Endothelial cell of umbilical vein (primary cell): ENCODE measurements at regions of chr9 and their contacts with region 1.

Region 1: GRCh38 chr9:19464764-19465585 is 56.2 kb downstream of the ACER2 start:
- DNase-seq: peak; percentile 63
- H3K4me3 ChIP-seq: peak overlapping the region; percentile 13 to 27 (median 19)
- H3K27ac ChIP-seq: no peak overlapping the region
- H3K4me1 ChIP-seq: peaks cover 2% of the 10 kb centered on the region
- H3K27me3 ChIP-seq: peaks cover 2% of the 10 kb centered on the region in 2 experiments
- CTCF ChIP-seq: peak; percentile 71 to 77
- POLR2A ChIP-seq: no peak

Region 2: GRCh38 chr9:18874069-18874468 is 590.9 kb before region 1 on chr9:
- CTCF ChIA-PET with region 1: no interaction called
- POLR2A ChIA-PET with region 1: no interaction called
- dilution Hi-C with region 1: no loop called
- intact Hi-C with region 1: no loop called
- DNase-seq: no peak
- H3K4me3 ChIP-seq: no peak overlapping the region
- H3K27ac ChIP-seq: no peak overlapping the region
- H3K4me1 ChIP-seq: no peaks in the 10 kb centered on the region
- H3K27me3 ChIP-seq: no peaks in the 10 kb centered on the region
- CTCF ChIP-seq: no peak
- POLR2A ChIP-seq: no peak

Region 3: DNA sequence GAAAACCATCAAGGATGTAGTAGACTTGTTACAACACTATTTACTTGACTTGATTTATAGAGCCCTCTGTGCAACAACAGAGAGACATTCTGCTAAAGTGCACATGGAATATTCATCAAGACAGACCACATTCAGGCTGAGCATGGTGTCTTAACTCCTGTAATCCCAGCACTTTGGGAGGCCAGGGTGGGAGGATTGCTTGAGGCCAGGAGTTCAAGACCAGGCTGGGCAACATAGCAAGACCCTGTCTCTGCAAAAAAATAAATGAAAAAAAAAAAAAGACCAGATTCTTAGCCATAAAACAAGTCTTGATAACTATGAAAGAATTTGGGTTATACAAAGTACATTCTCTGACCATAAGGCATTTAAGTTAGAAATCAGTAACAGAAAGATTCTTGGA is 209.2 kb before region 1 on chr9:
- CTCF ChIA-PET with region 1: no interaction called
- POLR2A ChIA-PET with region 1: no interaction called
- dilution Hi-C with region 1: no loop called
- intact Hi-C with region 1: no loop called
- DNase-seq: no peak
- H3K4me3 ChIP-seq: no peak overlapping the region
- H3K27ac ChIP-seq: no peak overlapping the region
- H3K4me1 ChIP-seq: no peaks in the 10 kb centered on the region
- H3K27me3 ChIP-seq: no peaks in the 10 kb centered on the region
- CTCF ChIP-seq: no peak
- POLR2A ChIP-seq: no peak

Region 4: DNA sequence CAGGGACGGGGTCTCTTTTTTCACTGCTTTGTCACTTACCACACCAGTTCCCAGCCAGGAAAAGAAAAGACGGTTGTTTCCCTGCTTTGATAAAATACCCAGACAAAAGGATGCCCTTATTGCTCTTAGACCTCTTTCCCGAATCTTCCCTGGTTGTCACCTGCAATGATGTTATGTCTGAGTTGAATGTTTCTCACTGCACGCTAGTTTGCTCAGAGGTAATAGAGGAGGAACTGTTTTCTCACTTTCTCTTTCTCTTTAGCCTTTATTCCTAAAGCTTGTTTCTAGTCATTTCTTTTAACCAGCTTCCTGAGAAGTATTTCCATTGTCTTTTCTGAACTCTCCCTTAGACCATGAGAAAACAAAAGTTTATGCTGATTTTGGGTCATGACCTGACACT is 23.2 kb before region 1 on chr9:
- CTCF ChIA-PET with region 1: interaction called, 15 read pairs
- POLR2A ChIA-PET with region 1: no interaction called
- dilution Hi-C with region 1: no loop called
- intact Hi-C with region 1: no loop called
- DNase-seq: peak; percentile 47
- H3K4me3 ChIP-seq: no peak overlapping the region
- H3K27ac ChIP-seq: no peak overlapping the region
- H3K4me1 ChIP-seq: no peaks in the 10 kb centered on the region
- H3K27me3 ChIP-seq: no peaks in the 10 kb centered on the region
- CTCF ChIP-seq: no peak
- POLR2A ChIP-seq: no peak

Region 5: GRCh38 chr9:19485188-19485587 is 20.2 kb after region 1 on chr9:
- CTCF ChIA-PET with region 1: interaction called, 22 read pairs
- POLR2A ChIA-PET with region 1: no interaction called
- dilution Hi-C with region 1: no loop called
- intact Hi-C with region 1: no loop called
- DNase-seq: no peak
- H3K4me3 ChIP-seq: no peak overlapping the region
- H3K27ac ChIP-seq: no peak overlapping the region
- H3K4me1 ChIP-seq: no peaks in the 10 kb centered on the region
- H3K27me3 ChIP-seq: peaks cover 1 to 7% of the 10 kb centered on the region in 2 experiments
- CTCF ChIP-seq: no peak
- POLR2A ChIP-seq: no peak

Region 6: GRCh38 chr9:19748278-19749126 is 283.5 kb after region 1 on chr9:
- CTCF ChIA-PET with region 1: no interaction called
- POLR2A ChIA-PET with region 1: no interaction called
- dilution Hi-C with region 1: no loop called
- intact Hi-C with region 1: no loop called
- DNase-seq: peak; percentile 37
- H3K4me3 ChIP-seq: no peak overlapping the region
- H3K27ac ChIP-seq: peak overlapping the region; percentile 50
- H3K4me1 ChIP-seq: peaks cover 18% of the 10 kb centered on the region
- H3K27me3 ChIP-seq: no peaks in the 10 kb centered on the region
- CTCF ChIP-seq: no peak
- POLR2A ChIP-seq: no peak